Activated B cell treated with CpG ODN at 0.5 μM for 24 hours (primary cell): ENCODE measurements at regions of chr6 and their contacts with region 1.

Region 1: DNA sequence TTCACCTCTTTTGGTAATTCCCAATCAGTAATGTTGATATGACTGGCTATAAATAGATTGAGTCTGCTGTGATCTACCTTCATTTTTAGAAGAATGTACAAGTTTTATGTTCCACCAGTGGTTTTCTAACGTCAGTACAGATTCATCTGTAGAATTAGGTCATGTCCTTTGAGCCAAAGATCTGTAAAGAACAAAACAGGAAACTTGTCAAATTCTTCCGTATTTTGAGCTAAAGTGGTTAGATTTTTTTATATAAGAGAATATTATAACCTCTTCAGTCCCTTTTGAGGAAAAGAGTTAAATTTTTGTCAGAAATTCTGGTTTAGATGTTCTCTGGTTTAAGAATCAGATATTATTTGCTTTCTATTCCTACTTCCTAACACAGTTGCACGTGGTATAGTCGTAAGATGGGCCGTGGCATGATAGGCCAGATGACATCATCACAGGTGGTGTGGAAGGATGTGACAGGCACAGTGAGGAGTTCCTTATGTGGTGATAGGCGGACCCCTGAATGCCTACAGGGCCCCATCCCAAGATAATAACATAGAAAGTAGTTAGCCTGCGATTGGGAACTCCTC is 62.3 kb downstream of the SNX9 start:
- DNase-seq: no peak
- ATAC-seq: peak; percentile 86
- H3K4me3 Mint-ChIP-seq: peak overlapping the region; percentile 24
- H3K27ac Mint-ChIP-seq: peak overlapping the region; percentile 76
- H3K4me1 Mint-ChIP-seq: peaks cover 37% of the 10 kb centered on the region
- H3K27me3 Mint-ChIP-seq: no peaks in the 10 kb centered on the region
- CTCF ChIP-seq: no peak

Region 2: DNA sequence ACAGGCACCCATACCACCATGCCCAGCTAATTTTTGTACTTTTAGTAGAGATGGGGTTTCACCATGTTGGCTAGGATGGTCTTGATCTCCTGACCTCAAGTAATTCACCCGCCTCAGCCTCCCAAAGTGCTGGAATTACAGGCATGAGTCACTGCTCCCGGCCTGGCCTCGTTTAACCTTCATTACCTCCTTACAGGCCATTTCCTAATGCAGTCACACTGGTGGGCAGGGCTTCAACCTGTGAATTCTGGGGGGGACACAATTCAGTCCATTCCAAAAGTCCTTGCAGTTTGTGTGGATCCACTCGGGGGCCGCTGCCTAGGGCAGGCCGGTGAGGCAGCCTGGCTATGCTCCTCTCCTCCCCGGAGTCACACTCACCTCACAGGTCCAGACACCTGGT is 174.7 kb before region 1 on chr6:
- CTCF ChIA-PET with region 1: no interaction called
- POLR2A ChIA-PET with region 1: no interaction called
- intact Hi-C with region 1: no loop called
- DNase-seq: no peak
- ATAC-seq: no peak
- H3K4me3 Mint-ChIP-seq: no peak overlapping the region
- H3K27ac Mint-ChIP-seq: no peak overlapping the region
- H3K4me1 Mint-ChIP-seq: no peaks in the 10 kb centered on the region
- H3K27me3 Mint-ChIP-seq: no peaks in the 10 kb centered on the region
- CTCF ChIP-seq: no peak

Region 3: DNA sequence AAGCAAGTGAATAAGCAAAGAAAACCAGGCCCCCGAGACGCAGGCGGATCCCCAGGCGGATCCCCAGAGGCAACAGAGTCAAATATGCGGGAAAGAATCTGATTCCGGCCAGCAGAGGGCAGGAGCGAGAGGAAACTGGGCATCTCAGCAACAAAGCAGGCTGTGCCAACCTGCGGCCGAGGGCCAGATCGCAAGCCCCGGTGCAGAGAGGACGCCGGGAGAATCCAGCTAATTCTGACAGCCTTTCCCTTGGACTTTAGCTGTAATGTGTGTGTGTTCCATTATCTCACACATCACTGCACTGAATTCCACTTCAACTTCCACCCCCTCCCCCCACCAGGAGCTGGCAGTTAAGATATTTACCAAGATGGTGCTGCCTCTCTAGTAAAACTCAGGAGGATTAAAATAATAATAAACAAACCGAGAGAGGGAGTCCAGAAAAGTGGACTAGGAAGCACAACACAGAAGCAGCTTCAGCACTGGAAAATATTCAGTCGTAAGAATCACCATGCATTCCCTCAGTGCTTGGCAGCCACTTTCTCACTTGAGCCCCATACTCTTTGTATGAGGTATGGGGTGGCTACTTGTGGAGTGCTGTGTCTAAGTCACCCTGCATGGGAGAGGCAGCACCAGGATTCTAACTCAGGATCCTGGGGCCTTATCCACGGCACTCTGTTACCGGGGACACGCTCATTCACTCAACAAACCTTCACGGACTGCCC is 128.4 kb before region 1 on chr6:
- CTCF ChIA-PET with region 1: interaction called, 250 read pairs
- POLR2A ChIA-PET with region 1: interaction called, 10 read pairs
- intact Hi-C with region 1: no loop called
- DNase-seq: peak; percentile 72
- ATAC-seq: peak; percentile 54
- H3K4me3 Mint-ChIP-seq: peak overlapping the region; percentile 38
- H3K27ac Mint-ChIP-seq: no peak overlapping the region
- H3K4me1 Mint-ChIP-seq: peaks cover 69% of the 10 kb centered on the region
- H3K27me3 Mint-ChIP-seq: peaks cover 6% of the 10 kb centered on the region
- CTCF ChIP-seq: peak; percentile 60

Region 4: GRCh38 chr6:157946865-157947532 is 61.7 kb after region 1 on chr6:
- CTCF ChIA-PET with region 1: no interaction called
- POLR2A ChIA-PET with region 1: no interaction called
- intact Hi-C with region 1: no loop called
- DNase-seq: no peak
- ATAC-seq: peak; percentile 42
- H3K4me3 Mint-ChIP-seq: no peak overlapping the region
- H3K27ac Mint-ChIP-seq: no peak overlapping the region
- H3K4me1 Mint-ChIP-seq: peaks cover 7% of the 10 kb centered on the region
- H3K27me3 Mint-ChIP-seq: no peaks in the 10 kb centered on the region
- CTCF ChIP-seq: no peak

Region 5: GRCh38 chr6:157981395-157982296 is 96.3 kb after region 1 on chr6 and contains the start of gene SYNJ2:
- CTCF ChIA-PET with region 1: no interaction called
- POLR2A ChIA-PET with region 1: no interaction called
- intact Hi-C with region 1: loop called (anchors 5 kb)
- DNase-seq: peak; percentile 78
- ATAC-seq: peak; percentile 86
- H3K4me3 Mint-ChIP-seq: peak within 1 kb of the TSS; percentile 89
- H3K27ac Mint-ChIP-seq: peak within 1 kb of the TSS; percentile 77
- H3K4me1 Mint-ChIP-seq: peaks cover 43% of the 10 kb centered on the region
- H3K27me3 Mint-ChIP-seq: no peaks in the 10 kb centered on the region
- CTCF ChIP-seq: no peak
- total RNA-seq, gene SYNJ2: 20.7 and 25.0 TPM in 2 replicates

Region 6: DNA sequence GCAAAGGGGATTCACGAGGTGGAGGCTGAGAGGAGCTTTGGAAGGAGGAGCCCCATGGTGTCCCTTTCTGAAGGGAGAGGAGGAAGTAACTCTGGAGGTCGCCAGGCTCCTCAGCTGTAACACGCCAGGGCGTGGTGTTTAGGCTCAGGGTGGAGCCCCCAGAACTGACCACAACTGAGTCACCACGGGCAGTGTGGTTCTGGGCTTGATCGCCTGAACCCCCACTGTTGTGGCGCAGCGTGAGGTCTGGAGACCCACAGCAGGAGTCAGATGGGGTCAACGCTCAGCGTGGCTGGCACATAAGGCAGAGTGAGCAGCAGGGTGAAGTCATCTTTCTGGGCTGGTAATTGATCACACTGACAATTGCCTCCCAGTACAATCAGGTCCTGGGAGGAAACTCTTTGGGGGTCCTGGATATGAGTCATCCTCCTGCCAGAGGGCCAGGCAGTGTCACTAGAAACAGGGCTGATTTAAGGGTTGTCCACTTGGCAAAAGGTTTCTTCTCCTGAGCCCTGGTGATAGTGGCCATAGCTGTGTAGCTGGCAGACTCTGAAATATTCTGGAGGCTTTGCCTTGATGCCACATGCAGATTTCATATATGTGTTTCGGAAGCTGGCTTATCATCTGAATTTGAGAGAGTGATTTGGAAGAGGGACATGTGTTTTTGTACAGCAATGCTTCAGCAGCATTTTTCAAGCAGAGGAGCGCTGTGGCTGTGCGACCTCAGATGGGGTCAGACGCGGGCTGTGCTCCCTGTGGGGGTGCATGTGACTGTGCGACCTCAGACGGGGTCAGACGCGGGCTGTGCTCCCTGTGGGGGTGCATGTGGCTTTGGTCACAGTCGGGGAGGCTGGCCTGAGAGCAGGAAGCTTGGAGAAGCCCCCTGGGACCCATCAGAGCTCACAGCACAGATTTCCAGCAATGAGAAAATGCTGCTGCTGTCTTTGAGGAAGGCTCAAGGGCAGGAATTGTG is 146.4 kb after region 1 on chr6:
- CTCF ChIA-PET with region 1: no interaction called
- POLR2A ChIA-PET with region 1: no interaction called
- intact Hi-C with region 1: no loop called
- DNase-seq: peak; percentile 34
- ATAC-seq: peak; percentile 25
- H3K4me3 Mint-ChIP-seq: peak overlapping the region; percentile 58
- H3K27ac Mint-ChIP-seq: peak overlapping the region; percentile 85
- H3K4me1 Mint-ChIP-seq: peaks cover 44% of the 10 kb centered on the region
- H3K27me3 Mint-ChIP-seq: no peaks in the 10 kb centered on the region
- CTCF ChIP-seq: no peak

Region 7: GRCh38 chr6:159513074-159513720 is 1627.9 kb after region 1 on chr6:
- CTCF ChIA-PET with region 1: no interaction called
- POLR2A ChIA-PET with region 1: no interaction called
- intact Hi-C with region 1: no loop called
- DNase-seq: no peak
- ATAC-seq: no peak
- H3K4me3 Mint-ChIP-seq: no peak overlapping the region
- H3K27ac Mint-ChIP-seq: no peak overlapping the region
- H3K4me1 Mint-ChIP-seq: no peaks in the 10 kb centered on the region
- H3K27me3 Mint-ChIP-seq: peaks cover 12% of the 10 kb centered on the region
- CTCF ChIP-seq: no peak